HEK293 (cell line): ENCODE measurements at regions of chr19 and their contacts with region 1.

Region 1: DNA sequence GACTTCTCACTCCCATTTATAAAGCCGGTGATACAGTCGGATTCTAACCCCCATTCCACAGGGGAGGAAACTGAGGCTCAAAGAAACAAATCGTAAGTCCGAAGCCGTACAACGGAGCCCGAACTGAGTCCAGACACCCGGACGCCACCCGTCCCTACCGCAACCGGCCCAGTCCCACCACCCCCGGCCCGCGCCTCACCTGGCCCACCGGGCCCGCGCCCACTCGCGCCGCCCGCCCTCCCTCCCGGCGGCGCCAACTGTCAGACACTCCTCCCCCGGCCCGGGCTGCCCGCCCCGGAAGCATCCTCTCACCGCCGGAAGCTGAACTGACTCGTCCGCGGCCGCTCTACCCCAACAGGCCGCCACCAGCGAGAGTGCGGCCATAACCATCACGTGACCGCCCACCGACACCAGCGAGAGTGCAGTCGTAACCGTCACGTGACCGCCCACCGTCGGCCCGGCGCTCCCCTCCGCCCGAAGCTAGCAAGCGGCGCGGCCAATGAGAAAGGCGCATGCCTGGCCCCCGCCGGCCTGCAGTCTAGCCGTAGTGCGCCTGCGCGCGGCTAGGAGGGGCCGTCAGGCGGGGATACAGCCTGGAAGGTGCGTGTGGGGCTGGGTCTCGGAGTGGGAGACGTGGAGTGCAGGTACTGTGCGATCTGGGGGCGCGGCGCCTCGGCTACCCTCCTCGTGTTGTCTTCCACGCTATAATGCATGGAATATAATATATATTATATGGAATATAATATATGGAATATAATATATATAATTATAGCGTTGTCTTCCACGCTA is at the starts of genes C19orf47 and PLD3:
- H3K4me3 ChIP-seq: peak within 1 kb of the TSS; percentile 71
- H3K27ac ChIP-seq: peak within 1 kb of the TSS; percentile 73
- H3K4me1 ChIP-seq: peaks cover 8% of the 10 kb centered on the region
- CTCF ChIP-seq: peak; percentile 22; the same call in 1 of the 2 replicates

Region 2: DNA sequence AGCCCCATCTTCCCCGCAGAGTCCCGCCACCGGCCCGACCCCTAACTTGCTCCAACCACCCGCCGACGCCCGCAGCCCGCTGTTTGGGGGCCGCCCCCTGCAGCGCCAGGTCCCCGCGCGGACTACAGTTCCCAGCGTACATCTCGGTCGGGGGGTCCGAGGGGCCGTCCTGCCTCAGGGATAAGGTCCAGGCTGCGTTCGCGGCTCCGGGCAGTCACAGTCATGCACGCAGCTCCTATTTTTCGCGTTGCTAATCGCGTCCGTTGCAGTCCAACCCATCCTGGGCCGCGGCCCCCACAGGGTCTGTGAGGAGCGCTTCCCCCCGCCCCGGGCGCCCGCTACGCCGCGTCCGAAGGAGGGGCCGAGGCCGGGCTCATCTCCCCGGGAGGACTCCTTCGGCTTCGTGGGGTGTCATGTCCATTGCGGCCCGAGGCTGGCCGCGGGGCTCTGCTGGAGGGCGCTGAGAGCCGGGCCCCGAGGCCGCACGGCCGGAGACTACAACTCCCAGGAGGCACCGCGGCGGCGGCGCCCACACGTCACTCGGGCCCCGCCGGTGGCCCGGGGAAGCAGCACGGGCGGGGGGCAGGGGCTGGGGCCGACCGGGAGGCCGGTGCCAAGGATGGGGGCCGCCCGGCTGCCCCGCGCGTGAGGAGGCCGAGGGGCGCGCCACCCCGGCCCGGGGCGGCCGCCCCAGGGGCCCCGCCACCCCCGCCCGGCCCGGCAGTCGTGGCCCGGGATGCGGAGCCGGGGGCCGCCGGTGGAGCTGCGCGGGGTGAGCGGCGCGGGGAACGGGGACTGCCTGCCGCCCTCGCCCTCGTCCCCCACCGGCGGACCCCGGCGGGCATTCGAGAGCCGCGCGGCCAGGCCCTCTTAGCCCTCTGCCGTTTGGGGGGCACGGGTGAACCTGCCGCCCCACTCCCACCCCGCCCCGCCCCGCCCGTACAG is 157.2 kb before region 1 on chr19 and contains the start of gene MAP3K10:
- CTCF ChIA-PET with region 1: no interaction called
- POLR2A ChIA-PET with region 1: interaction called, 10 read pairs
- H3K4me3 ChIP-seq: peak within 1 kb of the TSS; percentile 81
- H3K27ac ChIP-seq: peak within 1 kb of the TSS; percentile 99
- H3K4me1 ChIP-seq: peaks cover 19% of the 10 kb centered on the region
- CTCF ChIP-seq: peak; percentile 51; the same call in 1 of the 2 replicates

Region 3: DNA sequence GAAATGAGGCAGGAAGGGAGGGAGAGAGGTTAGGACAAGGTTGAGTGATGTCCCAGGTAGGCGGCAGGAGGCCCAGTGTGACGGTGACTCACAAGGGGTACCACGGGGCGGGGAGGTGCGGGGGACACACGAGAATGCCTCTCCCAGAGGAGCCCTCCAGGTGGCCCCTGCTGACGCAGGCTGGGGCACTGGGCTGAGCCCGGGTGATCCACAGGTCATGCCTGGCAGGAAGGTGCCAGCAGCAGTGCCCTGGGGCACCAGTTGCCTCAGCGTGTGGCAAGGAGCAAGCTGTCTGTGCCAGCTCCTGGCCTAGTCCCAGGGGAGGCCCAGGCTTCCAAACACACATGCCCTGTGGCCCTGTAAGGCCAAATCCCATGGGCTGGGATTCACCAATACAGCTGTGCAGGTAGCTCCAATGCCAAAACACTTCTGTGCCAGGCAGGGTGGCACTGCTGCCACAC is 91.2 kb before region 1 on chr19:
- CTCF ChIA-PET with region 1: no interaction called
- POLR2A ChIA-PET with region 1: no interaction called
- H3K4me3 ChIP-seq: no peak overlapping the region
- H3K27ac ChIP-seq: 0 out of 2 replicates have a peak overlapping the region, but pooled peaks have one; percentile 31
- H3K4me1 ChIP-seq: peaks cover 6% of the 10 kb centered on the region; the same call in 1 of the 2 replicates
- CTCF ChIP-seq: no peak

Region 4: DNA sequence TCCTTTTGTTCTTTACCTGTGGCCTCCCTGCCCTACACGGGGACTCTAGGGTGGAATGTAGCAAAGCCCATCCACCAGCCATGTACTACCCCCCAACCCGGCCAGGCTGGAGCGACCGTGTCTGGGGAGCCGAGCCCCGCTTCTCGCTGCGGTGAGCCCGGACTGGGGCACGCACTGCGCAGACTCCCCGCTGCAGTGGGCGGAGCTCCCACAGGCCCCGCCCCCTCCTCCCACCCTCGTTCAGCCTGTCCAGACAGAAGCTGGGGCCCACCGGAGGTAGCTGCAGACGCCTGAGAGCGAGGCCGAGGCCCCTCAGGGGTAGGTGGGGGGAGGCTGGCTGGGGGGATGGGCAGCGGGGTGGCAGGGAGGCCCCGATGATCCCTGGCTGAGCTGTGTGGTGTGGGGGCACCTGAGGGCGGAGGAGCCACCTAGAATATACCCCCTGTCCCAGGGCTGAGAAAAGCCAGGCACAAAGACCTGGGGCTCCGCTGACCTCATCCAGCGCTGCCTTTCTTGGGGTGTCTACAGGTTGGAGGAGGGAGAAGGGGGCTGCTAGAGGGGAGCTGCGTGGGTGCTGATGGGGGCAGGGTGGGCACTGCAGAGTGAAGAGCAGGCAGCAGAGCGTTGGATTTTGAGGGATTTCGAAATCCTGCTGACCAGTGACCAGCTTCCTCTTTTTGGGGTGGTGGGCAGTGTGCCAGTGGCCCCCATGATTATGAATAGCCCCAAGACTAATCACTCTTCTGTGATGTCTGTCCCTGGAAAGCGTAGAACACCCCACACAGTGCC is 17.5 kb after region 1 on chr19:
- CTCF ChIA-PET with region 1: interaction called, 4 read pairs
- POLR2A ChIA-PET with region 1: interaction called, 45 read pairs
- H3K4me3 ChIP-seq: peak overlapping the region; percentile 41
- H3K27ac ChIP-seq: peak overlapping the region; percentile 54; the same call in 1 of the 2 replicates
- H3K4me1 ChIP-seq: peaks cover 27% of the 10 kb centered on the region
- CTCF ChIP-seq: no peak

Region 5: DNA sequence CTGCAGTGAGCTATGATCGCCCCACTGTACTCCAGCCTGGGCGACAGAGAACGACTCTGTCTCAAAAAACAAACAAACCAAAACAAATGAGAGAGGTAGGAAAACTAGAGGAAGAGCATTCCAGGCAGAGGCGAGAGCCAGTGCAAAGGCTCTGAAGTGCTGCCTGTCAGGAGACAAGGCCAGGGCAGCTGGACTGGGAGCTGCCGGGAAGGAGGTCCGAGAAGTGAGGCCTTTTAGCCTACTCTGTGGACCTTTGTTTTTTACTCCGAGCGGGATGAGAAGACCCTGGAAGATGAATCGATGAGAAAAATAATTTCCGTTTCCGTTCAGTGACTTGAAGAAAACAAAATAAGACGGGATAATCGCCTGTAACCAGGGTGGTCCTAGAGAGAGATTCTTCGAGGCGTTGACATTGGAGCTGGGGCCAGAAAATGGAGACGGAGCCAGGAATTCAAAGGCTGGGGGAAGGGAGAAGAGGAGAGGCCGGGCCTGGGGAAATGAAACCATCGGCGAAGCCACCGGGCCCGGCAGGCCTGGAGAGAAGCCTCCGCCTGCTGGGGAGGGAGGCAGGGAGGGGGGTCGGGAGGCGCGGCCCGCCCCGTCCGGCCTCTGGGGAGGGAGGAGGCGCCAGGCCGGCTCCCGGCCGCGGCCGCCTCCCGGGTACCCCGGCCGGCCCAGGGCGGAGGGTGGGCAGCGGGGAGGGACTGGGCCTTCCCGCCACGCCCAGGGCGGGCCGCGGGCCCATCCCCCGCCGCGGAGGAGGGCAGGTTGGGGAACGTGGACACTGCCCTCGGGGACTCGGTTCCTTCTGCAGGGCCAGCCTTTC is 85.3 kb after region 1 on chr19:
- CTCF ChIA-PET with region 1: no interaction called
- POLR2A ChIA-PET with region 1: interaction called, 10 read pairs
- H3K4me3 ChIP-seq: peak overlapping the region; percentile 34
- H3K27ac ChIP-seq: peak overlapping the region; percentile 100
- H3K4me1 ChIP-seq: peaks cover 16% of the 10 kb centered on the region
- CTCF ChIP-seq: no peak

Region 6: GRCh38 chr19:40465557-40466150 is 117.3 kb after region 1 on chr19 and contains the start of gene BLVRB:
- CTCF ChIA-PET with region 1: interaction called, 3 read pairs
- POLR2A ChIA-PET with region 1: interaction called, 11 read pairs
- H3K4me3 ChIP-seq: peak within 1 kb of the TSS; percentile 53
- H3K27ac ChIP-seq: peak within 1 kb of the TSS; percentile 20; the same call in 1 of the 2 replicates
- H3K4me1 ChIP-seq: peaks cover 13% of the 10 kb centered on the region
- CTCF ChIP-seq: no peak